HCT116 (cell line): ENCODE measurements at regions of chr4 and their contacts with region 1.

Region 1: GRCh38 chr4:13355111-13355880 is 128.8 kb downstream of the RAB28 start:
- DNase-seq: no peak
- ATAC-seq: no peak
- H3K4me3 ChIP-seq: no peak overlapping the region
- H3K27ac ChIP-seq: no peak overlapping the region
- H3K4me1 ChIP-seq: no peaks in the 10 kb centered on the region
- H3K27me3 ChIP-seq: no peaks in the 10 kb centered on the region
- CTCF ChIP-seq: no peak
- POLR2A ChIP-seq: no peak
- RAD21 ChIP-seq: no peak

Region 2: GRCh38 chr4:13920901-13921300 is 565.6 kb after region 1 on chr4:
- CTCF ChIA-PET with region 1: no interaction called
- POLR2A ChIA-PET with region 1: no interaction called
- RAD21 ChIA-PET with region 1: no interaction called
- intact Hi-C with region 1: loop called (anchors 5 kb)
- DNase-seq: no peak
- ATAC-seq: peak; percentile 20; the same call in 1 of the 2 replicates
- H3K4me3 ChIP-seq: no peak overlapping the region
- H3K27ac ChIP-seq: no peak overlapping the region
- H3K4me1 ChIP-seq: peaks cover 0 to 12% of the 10 kb centered on the region in 2 experiments; a peak in 1 of 4 replicates
- H3K27me3 ChIP-seq: no peaks in the 10 kb centered on the region
- CTCF ChIP-seq: no peak
- POLR2A ChIP-seq: no peak
- RAD21 ChIP-seq: no peak